Activated T-helper 2 cell treated with anti-CD3 and anti-CD28 coated beads, Interferon-gamma antibody, Interleukin-2, Interleukin-4, amounts not matched to agents 10 μg/mL and 5 μg/mL and 100 μg/mL, durations not matched to agents 14 hours and 24 hours and 36 hours (primary cell): ENCODE measurements at regions of chr2 and their contacts with region 1.

Region 1: GRCh38 chr2:144572977-144573376 is 53.1 kb upstream of the ZEB2 start:
- DNase-seq: no peak
- H3K4me3 Mint-ChIP-seq: no peak overlapping the region
- H3K27ac Mint-ChIP-seq: no peak overlapping the region
- H3K4me1 Mint-ChIP-seq: peaks cover 24% of the 10 kb centered on the region
- H3K27me3 Mint-ChIP-seq: peaks cover 21% of the 10 kb centered on the region

Region 2: GRCh38 chr2:144084114-144084661 is 488.8 kb before region 1 on chr2:
- intact Hi-C with region 1: loop called (anchors 5 kb)
- DNase-seq: no peak
- H3K4me3 Mint-ChIP-seq: no peak overlapping the region
- H3K27ac Mint-ChIP-seq: peak overlapping the region; percentile 23
- H3K4me1 Mint-ChIP-seq: peaks cover 31% of the 10 kb centered on the region
- H3K27me3 Mint-ChIP-seq: no peaks in the 10 kb centered on the region

Region 3: DNA sequence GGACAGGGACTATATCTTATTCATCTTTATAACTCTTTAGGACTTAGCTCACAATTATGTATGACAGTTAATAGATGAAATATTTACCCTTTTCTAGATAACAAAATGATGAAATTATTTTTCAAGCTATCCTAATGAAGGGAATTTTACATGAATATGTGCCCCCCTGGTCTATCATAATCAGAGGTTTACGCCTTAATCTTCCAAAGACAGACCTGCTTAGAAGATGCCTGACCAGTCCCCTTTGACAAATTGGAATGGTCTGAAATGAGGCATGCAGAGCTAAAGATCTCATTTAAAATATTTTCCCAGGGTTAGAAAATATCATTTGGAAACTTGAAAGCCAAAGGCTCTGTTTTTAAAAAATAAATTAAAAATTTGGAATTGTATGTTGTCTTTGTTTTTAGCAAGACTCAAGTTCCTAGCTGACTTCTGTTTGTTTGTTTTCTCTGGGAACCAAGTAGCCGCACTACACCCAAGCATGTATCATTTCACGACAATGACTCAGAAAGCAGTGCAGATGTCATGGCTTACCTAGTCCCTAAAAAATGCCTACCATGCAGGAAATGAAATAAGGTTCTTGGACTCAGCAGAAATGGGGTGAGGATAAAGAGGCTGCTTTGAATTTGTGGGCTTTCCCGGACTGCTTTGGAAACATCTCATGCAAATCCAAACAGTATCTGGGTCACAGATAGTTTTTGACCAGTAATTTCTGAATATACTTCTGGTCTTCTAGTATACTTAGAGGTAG is 215.2 kb before region 1 on chr2:
- intact Hi-C with region 1: loop called (anchors 5 kb)
- DNase-seq: no peak
- H3K4me3 Mint-ChIP-seq: no peak overlapping the region
- H3K27ac Mint-ChIP-seq: peak overlapping the region; percentile 56
- H3K4me1 Mint-ChIP-seq: peaks cover 35% of the 10 kb centered on the region
- H3K27me3 Mint-ChIP-seq: no peaks in the 10 kb centered on the region

Region 4: DNA sequence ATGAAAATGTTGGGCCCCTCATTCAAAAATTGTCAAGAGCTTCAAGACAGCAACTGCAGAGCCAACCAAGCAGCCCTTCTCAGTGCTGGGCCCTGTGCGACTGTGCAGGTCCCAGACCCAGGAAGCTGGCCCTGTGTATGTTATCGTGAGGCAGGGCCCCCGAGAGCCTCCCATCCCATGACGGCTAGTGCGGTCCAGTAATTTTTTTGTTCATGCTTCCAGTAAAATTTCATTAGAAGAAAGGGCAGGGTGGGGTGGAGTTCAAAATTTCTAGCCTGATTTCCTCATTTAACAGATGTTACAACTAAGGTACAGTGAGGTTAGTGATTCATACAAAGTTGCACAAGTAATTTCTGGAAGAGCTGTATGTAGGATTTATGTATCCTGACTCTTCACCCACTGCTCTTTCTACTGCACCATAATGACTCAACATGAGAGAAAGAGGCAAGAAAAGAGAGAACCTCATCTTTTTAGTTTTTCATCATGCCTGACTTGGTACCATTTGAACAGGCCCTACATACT is 158.6 kb before region 1 on chr2:
- intact Hi-C with region 1: loop called (anchors 2 kb)
- DNase-seq: no peak
- H3K4me3 Mint-ChIP-seq: no peak overlapping the region
- H3K27ac Mint-ChIP-seq: peak overlapping the region; percentile 81
- H3K4me1 Mint-ChIP-seq: peaks cover 24% of the 10 kb centered on the region
- H3K27me3 Mint-ChIP-seq: no peaks in the 10 kb centered on the region

Region 5: DNA sequence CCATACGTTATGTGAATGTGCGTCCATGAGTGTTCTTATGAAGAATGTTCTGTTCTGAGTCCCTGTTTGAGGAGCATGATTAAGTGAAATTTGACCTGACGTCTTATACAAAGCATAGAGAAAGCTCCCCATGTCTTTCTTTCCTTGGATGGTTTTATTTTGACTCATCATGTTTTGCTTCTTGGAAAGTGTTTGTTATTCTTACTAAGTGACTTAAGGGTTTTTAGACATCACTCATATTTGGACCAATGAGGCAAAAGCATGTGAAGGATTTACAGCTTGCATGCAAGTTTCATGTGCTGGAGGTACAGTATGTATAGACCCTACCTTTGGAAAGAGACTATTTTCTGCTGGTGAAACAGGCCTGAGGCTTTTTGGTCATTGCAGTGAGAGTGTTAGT is 19.6 kb before region 1 on chr2:
- intact Hi-C with region 1: loop called (anchors 1 kb)
- DNase-seq: no peak
- H3K4me3 Mint-ChIP-seq: no peak overlapping the region
- H3K27ac Mint-ChIP-seq: no peak overlapping the region
- H3K4me1 Mint-ChIP-seq: peaks cover 20% of the 10 kb centered on the region
- H3K27me3 Mint-ChIP-seq: peaks cover 16% of the 10 kb centered on the region